ENCODE measurements at regions of chr20 and their contacts with region 1.

Region 1: GRCh38 chr20:33097001-33097400 is 17.6 kb downstream of the BPIFB4 start:
- DNase-seq: no peak
- ATAC-seq: no peak
- H3K4me3 ChIP-seq: no peak overlapping the region
- H3K4me3 Mint-ChIP-seq: no peak overlapping the region
- H3K27ac ChIP-seq: no peak overlapping the region
- H3K27ac Mint-ChIP-seq: no peak overlapping the region
- H3K4me1 ChIP-seq: peaks cover 0 to 8% of the 10 kb centered on the region in 2 donors
- H3K4me1 Mint-ChIP-seq: peaks cover 0 to 12% (median 5%) of the 10 kb centered on the region in 7 donors
- H3K27me3 ChIP-seq: no peaks in the 10 kb centered on the region
- H3K27me3 Mint-ChIP-seq: peaks cover 0 to 4% (median 0%) of the 10 kb centered on the region in 5 donors

Region 2: DNA sequence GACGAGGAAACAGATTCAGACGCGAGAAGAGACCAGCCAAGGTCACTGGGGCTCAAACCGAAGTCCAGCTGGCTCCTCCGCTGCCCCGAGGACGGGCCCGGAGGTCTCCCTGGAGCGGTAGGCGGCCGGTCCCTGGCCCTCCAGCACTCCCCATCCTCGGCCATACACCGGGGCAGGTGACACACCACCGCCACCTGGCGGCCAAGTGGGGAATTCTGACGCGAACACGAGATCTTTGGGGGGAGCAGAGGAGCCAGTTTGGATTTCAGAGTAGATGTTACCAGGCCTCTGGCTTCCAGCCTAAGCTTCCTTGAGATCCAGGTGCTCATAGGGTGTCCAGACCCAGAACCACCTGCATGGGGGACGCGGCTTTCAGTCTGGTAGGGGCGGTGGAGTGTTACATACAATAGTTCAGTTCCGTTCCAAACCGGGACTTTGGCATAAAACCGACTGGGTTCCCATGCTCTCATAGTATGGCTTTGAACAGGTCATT is 202.2 kb after region 1 on chr20:
- CTCF ChIA-PET with region 1: no interaction called
- POLR2A ChIA-PET with region 1: no interaction called
- intact Hi-C with region 1: loop called in 1 of 2 experiments (anchors 10 kb)
- DNase-seq: peak; percentile 48 to 81 (median 70)
- ATAC-seq: peak; percentile 87
- H3K4me3 ChIP-seq: no peak overlapping the region
- H3K4me3 Mint-ChIP-seq: peak overlapping the region in 1 of 10 donors; percentile 8
- H3K27ac ChIP-seq: no peak overlapping the region
- H3K27ac Mint-ChIP-seq: no peak overlapping the region
- H3K4me1 ChIP-seq: peaks cover 0 to 6% of the 10 kb centered on the region in 2 donors
- H3K4me1 Mint-ChIP-seq: peaks cover 0 to 3% (median 0%) of the 10 kb centered on the region in 7 donors
- H3K27me3 ChIP-seq: no peaks in the 10 kb centered on the region
- H3K27me3 Mint-ChIP-seq: peaks cover 4 to 19% (median 12%) of the 10 kb centered on the region in 5 donors

Measured in naive thymus-derived CD4-positive, alpha-beta T cell (primary cell).